Ascending aorta (tissue), 2 donors: ENCODE measurements at regions of chr9 and their contacts with region 1.

Region 1: DNA sequence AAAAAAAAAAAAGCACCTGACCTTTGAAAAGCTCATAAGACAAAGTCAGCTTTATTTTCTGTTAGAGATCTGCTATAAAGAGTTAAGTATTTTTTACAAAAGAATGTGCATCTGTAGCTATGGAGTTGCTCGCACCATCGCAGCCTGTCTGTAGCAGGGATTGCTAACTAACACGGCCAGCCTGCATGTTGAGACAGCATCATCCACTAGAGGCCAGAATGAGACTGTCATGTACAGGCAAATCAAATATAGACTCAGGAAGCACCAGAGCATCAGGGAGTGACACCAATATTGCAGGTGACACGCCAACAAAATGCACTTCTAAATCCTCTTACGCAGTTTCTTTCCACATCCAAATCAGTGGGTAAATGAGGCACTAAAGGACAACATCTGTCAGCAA is 136.3 kb upstream of the RASEF start:
- DNase-seq: no peak
- H3K4me3 ChIP-seq: no peak overlapping the region
- H3K27ac ChIP-seq: no peak overlapping the region
- H3K4me1 ChIP-seq: no peaks in the 10 kb centered on the region
- H3K27me3 ChIP-seq: no peaks in the 10 kb centered on the region
- CTCF ChIP-seq: peak; percentile 11 to 52 (median 36)

Region 2: DNA sequence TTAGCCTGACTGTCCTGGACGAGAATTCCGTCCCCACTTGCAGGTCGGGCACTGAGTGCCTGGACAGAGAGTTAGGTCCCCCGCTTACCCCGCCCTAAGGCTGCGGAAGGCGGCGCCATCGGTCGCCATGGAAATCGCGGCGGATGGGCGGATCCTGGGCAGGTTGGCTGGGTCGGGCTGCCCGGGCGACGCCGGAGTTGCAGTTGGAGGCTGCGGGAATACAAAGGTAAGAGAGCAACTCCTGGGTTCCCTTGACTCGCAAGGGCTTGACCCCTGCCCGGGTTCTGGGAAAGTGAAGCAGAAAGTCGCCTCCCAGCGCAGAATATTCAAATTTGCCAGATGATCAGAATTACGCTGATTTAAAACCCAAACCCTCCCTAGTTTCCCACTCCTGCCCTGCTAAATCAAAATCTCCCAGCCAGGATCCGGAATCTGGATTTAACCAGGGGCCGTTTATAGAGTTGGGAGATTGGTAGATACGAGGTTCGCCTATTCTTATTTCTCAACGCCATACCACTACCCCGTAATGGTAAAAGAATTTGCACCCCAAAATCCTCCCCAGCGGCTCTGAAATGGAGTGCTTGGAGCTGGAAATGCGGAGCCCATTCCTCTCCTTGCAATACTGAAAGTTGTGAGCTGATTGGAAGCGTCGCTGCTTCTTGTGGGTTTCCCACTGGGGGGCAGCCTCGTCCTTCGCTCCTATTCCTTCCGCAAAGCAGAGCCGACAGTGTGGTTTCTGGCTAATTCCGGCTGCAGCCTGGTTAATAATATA is 20.1 kb after region 1 on chr9:
- intact Hi-C with region 1: loop called (anchors 1 kb)
- DNase-seq: peak in 1 of 2 donors; percentile 76
- H3K4me3 ChIP-seq: peak overlapping the region; percentile 69 to 71
- H3K27ac ChIP-seq: peak overlapping the region; percentile 48 to 61
- H3K4me1 ChIP-seq: peaks cover 0 to 2% of the 10 kb centered on the region in 2 donors
- H3K27me3 ChIP-seq: no peaks in the 10 kb centered on the region
- CTCF ChIP-seq: no peak

Region 3: DNA sequence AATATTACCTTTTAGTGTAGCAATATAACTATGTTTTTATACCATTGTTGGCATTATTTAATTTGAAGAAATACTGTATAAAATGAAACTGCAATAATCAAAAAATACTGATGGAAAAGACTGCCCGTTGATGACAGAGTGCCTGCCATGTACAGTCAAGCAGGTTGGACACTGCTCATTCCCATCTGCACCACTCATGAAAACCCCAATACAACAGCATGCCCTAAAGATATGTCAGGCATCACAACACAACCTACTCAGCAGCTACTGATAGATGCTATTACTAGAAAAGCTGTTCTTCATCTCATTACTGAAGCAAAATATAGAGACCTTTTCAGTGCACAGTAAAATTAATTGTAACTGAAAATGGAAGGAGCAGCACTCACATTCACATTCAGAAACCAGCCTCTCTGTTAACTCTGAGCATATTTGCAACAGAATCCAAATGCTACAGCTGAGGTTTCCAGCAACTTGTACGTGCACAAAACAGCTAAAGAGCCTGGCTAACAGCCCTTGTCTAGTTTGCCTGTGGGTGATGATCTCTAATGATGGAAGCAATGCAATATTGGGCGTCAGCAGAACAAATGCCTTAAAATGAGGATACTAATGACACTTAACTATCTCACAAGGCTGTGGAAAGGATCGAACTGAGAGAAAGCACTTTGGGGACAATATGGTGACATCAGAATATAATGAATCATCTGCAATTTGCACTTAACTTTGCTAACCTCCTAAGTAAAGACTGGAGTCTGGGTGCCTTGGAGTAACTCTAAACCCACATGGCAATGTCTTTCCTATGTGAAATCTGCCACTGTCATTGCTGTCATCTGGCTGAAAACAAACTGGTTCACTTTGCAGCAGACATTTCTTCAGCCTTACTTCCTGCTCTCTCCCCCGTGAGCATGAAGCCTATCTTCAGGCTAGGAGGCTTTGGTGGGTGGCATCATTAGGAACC is 59.0 kb after region 1 on chr9:
- intact Hi-C with region 1: no loop called
- DNase-seq: no peak
- H3K4me3 ChIP-seq: no peak overlapping the region
- H3K27ac ChIP-seq: no peak overlapping the region
- H3K4me1 ChIP-seq: no peaks in the 10 kb centered on the region
- H3K27me3 ChIP-seq: no peaks in the 10 kb centered on the region
- CTCF ChIP-seq: no peak

Region 4: GRCh38 chr9:84101964-84102632 is 902.9 kb after region 1 on chr9:
- intact Hi-C with region 1: no loop called
- DNase-seq: no peak
- H3K4me3 ChIP-seq: no peak overlapping the region
- H3K27ac ChIP-seq: no peak overlapping the region
- H3K4me1 ChIP-seq: no peaks in the 10 kb centered on the region
- H3K27me3 ChIP-seq: no peaks in the 10 kb centered on the region
- CTCF ChIP-seq: no peak

Region 5: DNA sequence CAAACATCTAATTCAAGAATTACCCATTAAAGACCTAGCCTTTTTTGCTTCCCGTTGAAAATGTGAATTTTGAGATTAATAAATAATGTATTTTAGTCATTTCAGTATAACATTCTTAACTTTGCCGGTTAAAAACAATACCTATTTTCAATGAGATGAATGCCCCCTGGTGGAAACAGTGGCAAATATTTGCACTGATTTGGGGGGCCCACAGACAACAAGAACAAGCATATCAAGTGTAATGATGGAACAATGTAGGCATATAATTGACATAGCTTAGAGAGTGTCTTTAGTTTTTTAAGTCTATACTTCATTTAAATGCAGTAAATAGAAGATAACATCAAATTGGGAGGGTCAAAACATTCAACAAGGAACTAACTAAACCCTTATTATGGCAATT is 1582.2 kb after region 1 on chr9:
- intact Hi-C with region 1: loop called (anchors 10 kb)
- DNase-seq: no peak
- H3K4me3 ChIP-seq: no peak overlapping the region
- H3K27ac ChIP-seq: no peak overlapping the region
- H3K4me1 ChIP-seq: no peaks in the 10 kb centered on the region
- H3K27me3 ChIP-seq: no peaks in the 10 kb centered on the region
- CTCF ChIP-seq: peak in 1 of 3 experiments; percentile 24